ENCODE measurements at regions of chr1 and their contacts with region 1.

Region 1: DNA sequence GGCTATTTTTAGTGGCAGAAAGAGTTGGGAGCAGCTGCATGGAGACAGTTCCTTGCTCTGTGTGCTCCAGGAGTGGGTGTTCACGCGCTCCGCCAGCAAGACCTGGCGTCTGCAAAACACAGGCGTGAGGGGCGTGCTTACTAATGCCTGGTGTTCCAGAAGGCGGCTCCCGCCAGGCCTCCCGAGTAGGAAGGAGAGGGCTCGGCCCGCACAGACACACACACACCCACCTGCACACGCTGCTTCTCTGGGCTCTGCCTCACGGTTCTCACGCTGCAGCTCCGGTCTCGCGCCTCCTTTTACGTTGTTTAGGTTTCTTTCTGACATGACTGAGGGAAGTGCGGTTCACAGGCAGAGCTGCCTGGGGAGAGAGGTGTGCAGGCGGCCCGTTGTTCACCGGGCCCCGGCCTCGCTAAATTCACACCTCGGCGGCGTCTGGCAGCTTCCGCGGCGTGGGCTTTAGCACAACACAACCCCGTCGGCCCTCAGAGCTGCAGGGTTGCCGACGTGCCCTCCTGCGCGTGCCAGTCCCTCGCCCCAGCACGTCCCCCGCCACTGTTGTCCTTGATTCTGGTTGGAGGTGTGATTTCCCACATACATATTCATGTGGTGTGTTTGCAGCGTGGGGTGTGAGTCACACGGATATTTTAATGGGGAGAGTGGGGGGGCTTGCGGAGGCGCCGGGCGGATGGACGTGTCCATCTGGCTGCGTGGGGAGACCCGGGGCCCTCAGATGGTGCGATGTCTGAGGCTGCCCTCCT is 77.0 kb downstream of the SKI start:
- DNase-seq: peak; percentile 70
- H3K4me3 ChIP-seq: no peak overlapping the region
- H3K27ac ChIP-seq: no peak overlapping the region
- H3K4me1 ChIP-seq: peaks cover 21% of the 10 kb centered on the region
- H3K27me3 ChIP-seq: no peaks in the 10 kb centered on the region
- CTCF ChIP-seq: no peak
- POLR2A ChIP-seq: no peak

Region 2: GRCh38 chr1:2233997-2234761 is 70.9 kb before region 1 on chr1:
- intact Hi-C with region 1: loop called (anchors 5 kb)
- DNase-seq: peak; percentile 94
- H3K4me3 ChIP-seq: no peak overlapping the region
- H3K27ac ChIP-seq: peak overlapping the region; percentile 75 to 81
- H3K4me1 ChIP-seq: peaks cover 93% of the 10 kb centered on the region
- H3K27me3 ChIP-seq: no peaks in the 10 kb centered on the region
- CTCF ChIP-seq: no peak
- POLR2A ChIP-seq: no peak

Measured in testis (tissue), 5 donors.